Activated CD8-positive, alpha-beta T cell treated with anti-CD3 and anti-CD28 coated beads for 36 hours (primary cell): ENCODE measurements at regions of chr18 and their contacts with region 1.

Region 1: GRCh38 chr18:3245853-3246634 is 1.6 kb upstream of the MYL12A start:
- DNase-seq: peak; percentile 92
- ATAC-seq: peak; percentile 70
- H3K4me3 Mint-ChIP-seq: peak overlapping the region; percentile 94
- H3K27ac Mint-ChIP-seq: peak overlapping the region; percentile 98
- H3K4me1 Mint-ChIP-seq: peaks cover 29% of the 10 kb centered on the region
- H3K27me3 Mint-ChIP-seq: no peaks in the 10 kb centered on the region
- CTCF ChIP-seq: peak; percentile 96

Region 2: GRCh38 chr18:2971741-2972552 is 274.1 kb before region 1 on chr18:
- CTCF ChIA-PET with region 1: interaction called, 3 read pairs
- POLR2A ChIA-PET with region 1: interaction called, 11 read pairs
- intact Hi-C with region 1: no loop called
- DNase-seq: peak; percentile 88
- ATAC-seq: peak; percentile 78
- H3K4me3 Mint-ChIP-seq: peak overlapping the region; percentile 81
- H3K27ac Mint-ChIP-seq: peak overlapping the region; percentile 99
- H3K4me1 Mint-ChIP-seq: peaks cover 91% of the 10 kb centered on the region
- H3K27me3 Mint-ChIP-seq: no peaks in the 10 kb centered on the region
- CTCF ChIP-seq: no peak

Region 3: GRCh38 chr18:2994603-2995432 is 251.2 kb before region 1 on chr18:
- CTCF ChIA-PET with region 1: interaction called, 33 read pairs
- POLR2A ChIA-PET with region 1: interaction called, 3 read pairs
- intact Hi-C with region 1: no loop called
- DNase-seq: peak; percentile 93
- ATAC-seq: peak; percentile 73
- H3K4me3 Mint-ChIP-seq: peak overlapping the region; percentile 36
- H3K27ac Mint-ChIP-seq: peak overlapping the region; percentile 87
- H3K4me1 Mint-ChIP-seq: peaks cover 84% of the 10 kb centered on the region
- H3K27me3 Mint-ChIP-seq: no peaks in the 10 kb centered on the region
- CTCF ChIP-seq: peak; percentile 76

Region 4: DNA sequence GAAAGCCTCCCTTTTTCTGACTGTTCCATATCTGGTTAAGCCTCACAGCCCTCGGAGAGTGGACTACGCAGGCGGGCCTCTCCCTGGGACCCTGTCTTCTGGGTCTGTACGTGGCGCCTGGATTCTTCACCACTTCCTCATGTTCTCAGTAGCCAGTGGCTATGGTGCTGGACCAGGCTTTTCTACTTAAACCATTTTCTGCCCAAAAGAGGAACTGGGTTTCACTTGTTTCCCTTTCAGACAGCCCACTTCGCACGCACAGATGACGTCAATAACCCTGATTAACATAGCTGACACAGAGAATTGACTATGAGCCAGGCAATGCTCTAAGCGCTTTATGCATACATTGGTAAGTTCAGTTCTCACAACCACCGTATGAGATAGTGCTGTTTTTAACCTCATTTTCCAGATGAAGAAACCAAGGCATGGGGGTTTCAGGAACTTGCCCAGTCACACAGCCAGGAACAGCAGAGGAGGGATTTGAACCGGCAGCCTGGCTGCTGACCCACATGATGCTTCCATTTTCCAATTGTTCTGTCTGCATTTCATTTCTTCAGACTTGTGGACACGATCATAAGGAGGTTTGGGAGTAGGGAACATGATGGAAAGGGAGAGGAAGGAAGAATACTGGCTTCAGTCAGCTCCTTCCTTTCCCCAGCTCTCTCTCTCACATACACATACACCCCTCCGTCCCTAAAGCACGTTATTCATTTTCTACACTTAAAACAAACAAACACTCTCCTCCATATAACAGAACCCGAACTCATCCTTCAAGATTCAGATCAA is 67.9 kb before region 1 on chr18:
- CTCF ChIA-PET with region 1: interaction called, 11 read pairs
- POLR2A ChIA-PET with region 1: interaction called, 3 read pairs
- intact Hi-C with region 1: no loop called
- DNase-seq: peak; percentile 9
- ATAC-seq: peak; percentile 53
- H3K4me3 Mint-ChIP-seq: no peak overlapping the region
- H3K27ac Mint-ChIP-seq: no peak overlapping the region
- H3K4me1 Mint-ChIP-seq: peaks cover 2% of the 10 kb centered on the region
- H3K27me3 Mint-ChIP-seq: no peaks in the 10 kb centered on the region
- CTCF ChIP-seq: no peak

Region 5: GRCh38 chr18:3234457-3234856 is 11.6 kb before region 1 on chr18:
- CTCF ChIA-PET with region 1: interaction called, 14 read pairs
- POLR2A ChIA-PET with region 1: interaction called, 3 read pairs
- intact Hi-C with region 1: no loop called
- DNase-seq: peak; percentile 36
- ATAC-seq: peak; percentile 34
- H3K4me3 Mint-ChIP-seq: no peak overlapping the region
- H3K27ac Mint-ChIP-seq: no peak overlapping the region
- H3K4me1 Mint-ChIP-seq: peaks cover 2% of the 10 kb centered on the region
- H3K27me3 Mint-ChIP-seq: no peaks in the 10 kb centered on the region
- CTCF ChIP-seq: no peak

Region 6: GRCh38 chr18:3554091-3554601 is 308.1 kb after region 1 on chr18:
- CTCF ChIA-PET with region 1: no interaction called
- POLR2A ChIA-PET with region 1: no interaction called
- intact Hi-C with region 1: no loop called
- DNase-seq: no peak
- ATAC-seq: no peak
- H3K4me3 Mint-ChIP-seq: no peak overlapping the region
- H3K27ac Mint-ChIP-seq: no peak overlapping the region
- H3K4me1 Mint-ChIP-seq: no peaks in the 10 kb centered on the region
- H3K27me3 Mint-ChIP-seq: no peaks in the 10 kb centered on the region
- CTCF ChIP-seq: no peak